GM23248 (cell line): ENCODE measurements at regions of chr1 and their contacts with region 1.

Region 1: DNA sequence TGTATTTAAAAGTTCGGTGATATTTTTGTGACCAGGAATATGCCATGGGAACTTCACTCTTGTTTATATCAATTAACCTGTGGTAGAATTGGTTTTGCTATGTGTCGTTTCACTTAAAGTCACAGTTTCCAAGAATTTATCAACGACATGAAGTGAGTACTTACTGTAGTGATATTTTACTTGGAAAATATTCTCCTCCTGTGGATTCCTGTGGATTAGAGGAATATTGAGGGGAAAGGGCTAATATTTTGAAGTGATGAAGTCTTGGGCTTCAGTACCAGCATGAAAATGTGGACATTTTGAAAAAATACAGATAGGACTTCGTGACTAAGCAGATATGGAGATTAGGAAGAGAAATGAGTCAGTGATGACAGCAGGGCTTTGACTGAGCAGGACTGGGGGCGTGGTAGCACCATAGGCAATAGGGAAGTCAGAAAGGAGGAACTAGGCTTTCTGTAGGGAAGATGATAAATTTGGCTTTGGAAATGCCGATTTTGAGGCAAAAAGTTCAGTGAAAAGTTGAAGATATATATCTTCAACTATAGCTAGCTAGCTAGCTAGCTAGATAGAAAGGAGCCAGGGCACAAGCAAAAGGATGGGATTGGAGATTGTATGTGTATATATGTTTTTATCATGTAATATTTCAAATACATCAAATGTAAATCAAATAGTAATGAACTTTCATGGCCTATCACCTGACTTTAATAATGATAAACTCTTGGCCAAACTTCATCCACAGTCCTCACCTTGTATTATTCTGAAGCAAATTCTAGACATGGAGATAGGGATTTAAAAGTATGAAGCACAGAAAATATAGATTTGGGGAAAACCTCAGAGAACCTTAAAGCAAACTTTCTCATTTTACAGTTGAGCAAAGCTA is 19.5 kb upstream of the KIF14 start:
- DNase-seq: peak; percentile 95
- H3K4me3 ChIP-seq: peak overlapping the region; percentile 20
- H3K27ac ChIP-seq: peak overlapping the region; percentile 82
- H3K4me1 ChIP-seq: peaks cover 20% of the 10 kb centered on the region
- H3K27me3 ChIP-seq: no peaks in the 10 kb centered on the region

Region 2: GRCh38 chr1:200802865-200803512 is 163.0 kb after region 1 on chr1:
- in situ Hi-C with region 1: loop called (anchors 10 kb)
- DNase-seq: peak; percentile 86
- H3K4me3 ChIP-seq: no peak overlapping the region
- H3K27ac ChIP-seq: no peak overlapping the region
- H3K4me1 ChIP-seq: no peaks in the 10 kb centered on the region
- H3K27me3 ChIP-seq: no peaks in the 10 kb centered on the region